ENCODE measurements at regions of chr2 and their contacts with region 1.

Region 1: GRCh38 chr2:219218732-219219701 is at the start of gene ABCB6:
- DNase-seq: peak; percentile 88
- H3K4me3 Mint-ChIP-seq: peak within 1 kb of the TSS; percentile 85
- H3K27ac Mint-ChIP-seq: peak within 1 kb of the TSS; percentile 82
- H3K4me1 Mint-ChIP-seq: peaks cover 38% of the 10 kb centered on the region
- H3K27me3 Mint-ChIP-seq: no peaks in the 10 kb centered on the region
- total RNA-seq, gene ABCB6: 15.2 to 17.9 TPM

Region 2: DNA sequence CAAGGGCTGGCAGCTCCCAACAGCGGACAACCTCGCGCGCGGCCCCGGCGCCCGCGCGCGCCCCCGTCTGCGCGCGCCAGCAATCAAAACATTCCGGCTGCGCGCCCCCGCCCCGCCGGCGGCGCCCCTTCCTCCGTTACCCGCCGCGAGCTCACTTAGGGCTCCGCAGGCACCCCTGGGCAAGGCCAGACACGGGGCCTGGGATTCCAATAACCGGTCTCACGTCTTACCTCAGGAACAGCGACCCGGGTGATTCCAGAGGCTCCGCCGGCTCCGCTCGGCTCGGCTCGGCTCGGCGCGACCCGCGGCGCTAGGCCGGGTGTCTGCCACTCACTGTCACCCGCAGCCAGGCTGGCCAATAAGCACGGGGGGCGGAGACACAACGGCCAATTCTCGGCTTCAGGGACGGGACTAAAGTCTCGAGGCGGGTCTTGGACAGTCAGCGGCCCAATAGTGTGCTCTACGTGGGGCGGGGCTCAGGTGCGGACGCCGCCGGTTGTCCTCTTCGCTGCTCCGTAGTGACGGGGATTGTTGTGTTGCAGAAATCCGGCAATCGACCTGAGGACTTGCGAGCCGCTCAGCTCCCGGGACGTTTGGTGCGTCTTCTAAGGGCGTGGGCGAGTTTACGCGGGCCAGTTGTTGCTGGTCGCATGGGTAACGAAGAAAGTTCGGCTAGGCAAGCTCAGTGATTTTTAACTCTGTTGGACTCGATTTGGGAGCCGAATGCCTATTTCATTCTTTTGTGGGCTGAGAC is 10.5 kb after region 1 on chr2 and contains the starts of genes ANKZF1 and ATG9A:
- CTCF ChIA-PET with region 1: interaction called, 3 read pairs
- POLR2A ChIA-PET with region 1: interaction called, 85 read pairs
- DNase-seq: peak; percentile 99
- H3K4me3 Mint-ChIP-seq: peak within 1 kb of the TSS; percentile 99
- H3K27ac Mint-ChIP-seq: peak within 1 kb of the TSS; percentile 100
- H3K4me1 Mint-ChIP-seq: peaks cover 56% of the 10 kb centered on the region
- H3K27me3 Mint-ChIP-seq: no peaks in the 10 kb centered on the region
- total RNA-seq, gene ANKZF1: 121 to 122 TPM
- total RNA-seq, gene ATG9A: 58.9 to 60.7 TPM

Region 3: DNA sequence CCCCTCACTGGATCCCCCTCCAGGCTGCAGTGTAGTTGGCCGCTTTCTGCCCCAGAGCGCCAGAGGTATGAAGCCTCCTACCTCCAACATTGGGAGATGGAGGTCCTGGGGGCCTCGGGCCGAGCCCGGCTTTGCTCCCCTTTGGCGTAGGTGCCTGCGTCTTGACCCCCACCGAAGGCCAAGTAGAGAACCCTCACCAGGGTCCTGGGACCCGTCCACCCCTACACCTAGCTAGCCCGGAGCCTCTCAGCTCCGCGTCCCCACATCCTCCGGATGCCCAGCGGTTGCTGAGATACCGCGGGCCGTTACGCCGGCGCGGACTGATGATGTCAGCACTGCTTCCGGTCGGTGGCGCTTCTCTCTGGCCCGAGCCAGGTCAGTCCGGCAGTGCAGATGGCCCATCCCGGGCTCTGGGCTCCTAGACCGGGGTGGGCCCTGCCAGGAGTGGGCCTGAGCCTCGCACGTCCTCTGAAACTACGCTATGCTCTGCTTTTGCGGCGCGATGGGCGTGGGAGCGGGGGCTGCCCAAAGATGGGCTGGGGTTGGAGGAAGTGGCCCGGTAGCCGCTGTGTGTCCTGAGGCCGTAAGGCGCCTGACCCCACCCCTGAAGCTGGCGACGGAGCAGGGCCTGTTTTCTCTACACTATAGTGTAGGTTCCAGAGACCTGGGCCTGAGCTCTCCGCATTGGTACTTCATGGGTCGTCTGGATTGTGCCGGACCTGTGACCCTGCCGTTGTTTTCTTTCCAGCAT is 26.3 kb after region 1 on chr2 and contains the starts of genes GLB1L and STK16:
- CTCF ChIA-PET with region 1: interaction called, 7 read pairs
- POLR2A ChIA-PET with region 1: interaction called, 34 read pairs
- DNase-seq: peak; percentile 92
- H3K4me3 Mint-ChIP-seq: peak within 1 kb of the TSS; percentile 100
- H3K27ac Mint-ChIP-seq: peak within 1 kb of the TSS; percentile 81
- H3K4me1 Mint-ChIP-seq: peaks cover 66% of the 10 kb centered on the region
- H3K27me3 Mint-ChIP-seq: no peaks in the 10 kb centered on the region
- total RNA-seq, gene GLB1L: 6.2 to 7.3 TPM
- total RNA-seq, gene STK16: 41.6 to 42.3 TPM

Region 4: GRCh38 chr2:219253753-219254590 is 35.0 kb after region 1 on chr2 and contains the start of gene TUBA4A:
- CTCF ChIA-PET with region 1: interaction called, 6 read pairs
- POLR2A ChIA-PET with region 1: interaction called, 63 read pairs
- DNase-seq: peak; percentile 92
- H3K4me3 Mint-ChIP-seq: peak within 1 kb of the TSS; percentile 100
- H3K27ac Mint-ChIP-seq: peak within 1 kb of the TSS; percentile 81
- H3K4me1 Mint-ChIP-seq: peaks cover 47% of the 10 kb centered on the region
- H3K27me3 Mint-ChIP-seq: peaks cover 2% of the 10 kb centered on the region
- total RNA-seq, gene TUBA4A: 313 to 344 TPM

Region 5: DNA sequence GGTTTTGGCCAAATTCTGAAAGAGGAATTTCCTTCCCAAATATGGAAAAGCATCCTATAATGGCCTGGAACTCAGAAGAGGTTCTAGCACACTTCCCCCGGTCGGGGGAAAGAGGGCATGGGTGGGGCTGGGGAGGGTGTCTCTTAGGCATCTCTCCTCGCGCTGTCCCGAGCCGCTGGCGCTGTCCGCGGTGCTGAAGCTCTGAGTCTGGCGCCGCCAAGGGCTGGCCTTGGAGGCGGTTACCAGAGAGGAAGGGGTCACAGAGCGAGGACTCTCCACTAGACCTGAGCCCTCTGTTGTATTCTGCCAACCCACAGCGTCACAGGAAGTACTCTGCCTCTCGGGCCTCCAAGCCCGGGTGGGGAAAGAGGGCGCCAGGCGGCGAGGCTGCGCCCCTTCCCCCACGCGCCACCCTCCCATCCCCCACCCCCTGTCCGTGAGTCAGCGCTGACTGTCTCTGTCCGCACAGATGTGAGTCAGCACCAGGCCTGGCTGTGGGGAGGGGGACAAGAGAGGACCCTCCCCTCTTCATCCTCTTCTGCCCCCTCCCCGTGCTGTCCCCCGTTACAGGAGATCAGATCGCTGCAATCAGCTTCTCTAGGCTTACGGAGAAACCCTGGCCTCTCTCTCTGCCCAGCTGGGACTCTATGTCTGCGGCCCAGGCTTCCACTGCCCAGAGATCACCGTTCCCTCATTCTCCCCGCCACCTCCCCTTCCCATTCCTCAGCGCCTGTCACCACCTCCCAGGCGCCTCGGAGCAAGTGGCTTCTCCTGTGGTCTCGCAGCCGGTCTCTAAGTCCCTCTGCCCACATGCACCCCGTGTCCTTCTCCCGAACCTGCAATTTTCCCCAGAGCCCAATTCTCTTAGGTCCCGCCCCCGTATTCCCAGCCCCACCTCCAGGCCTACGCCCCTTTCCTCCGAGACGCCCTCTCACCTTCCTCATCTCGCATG is 89.4 kb after region 1 on chr2:
- CTCF ChIA-PET with region 1: no interaction called
- POLR2A ChIA-PET with region 1: no interaction called
- DNase-seq: peak; percentile 74
- H3K4me3 Mint-ChIP-seq: no peak overlapping the region
- H3K27ac Mint-ChIP-seq: no peak overlapping the region
- H3K4me1 Mint-ChIP-seq: no peaks in the 10 kb centered on the region
- H3K27me3 Mint-ChIP-seq: peaks cover 60% of the 10 kb centered on the region

Region 6: GRCh38 chr2:219378163-219378851 is 159.3 kb after region 1 on chr2:
- CTCF ChIA-PET with region 1: no interaction called
- POLR2A ChIA-PET with region 1: no interaction called
- DNase-seq: no peak
- H3K4me3 Mint-ChIP-seq: no peak overlapping the region
- H3K27ac Mint-ChIP-seq: no peak overlapping the region
- H3K4me1 Mint-ChIP-seq: no peaks in the 10 kb centered on the region
- H3K27me3 Mint-ChIP-seq: no peaks in the 10 kb centered on the region